ENCODE measurements at regions of chr14 and their contacts with region 1.

Region 1: GRCh38 chr14:54566410-54567223 is at the start of gene SAMD4A:
- DNase-seq: peak; percentile 19 to 84 (median 55)
- ATAC-seq: peak; percentile 41
- H3K4me3 ChIP-seq: peak within 1 kb of the TSS; percentile 80
- H3K4me3 Mint-ChIP-seq: peak within 1 kb of the TSS; percentile 96
- H3K27ac ChIP-seq: peak within 1 kb of the TSS in 1 of 2 donors; percentile 41
- H3K27ac Mint-ChIP-seq: peak within 1 kb of the TSS; percentile 91
- H3K4me1 ChIP-seq: peaks cover 29% of the 10 kb centered on the region
- H3K4me1 Mint-ChIP-seq: peaks cover 15% of the 10 kb centered on the region
- H3K27me3 ChIP-seq: peaks cover 6 to 12% of the 10 kb centered on the region in 2 experiments
- H3K27me3 Mint-ChIP-seq: peaks cover 29% of the 10 kb centered on the region
- CTCF ChIP-seq: no peak
- total RNA-seq, gene SAMD4A: 1.9 to 2.3 TPM

Region 2: DNA sequence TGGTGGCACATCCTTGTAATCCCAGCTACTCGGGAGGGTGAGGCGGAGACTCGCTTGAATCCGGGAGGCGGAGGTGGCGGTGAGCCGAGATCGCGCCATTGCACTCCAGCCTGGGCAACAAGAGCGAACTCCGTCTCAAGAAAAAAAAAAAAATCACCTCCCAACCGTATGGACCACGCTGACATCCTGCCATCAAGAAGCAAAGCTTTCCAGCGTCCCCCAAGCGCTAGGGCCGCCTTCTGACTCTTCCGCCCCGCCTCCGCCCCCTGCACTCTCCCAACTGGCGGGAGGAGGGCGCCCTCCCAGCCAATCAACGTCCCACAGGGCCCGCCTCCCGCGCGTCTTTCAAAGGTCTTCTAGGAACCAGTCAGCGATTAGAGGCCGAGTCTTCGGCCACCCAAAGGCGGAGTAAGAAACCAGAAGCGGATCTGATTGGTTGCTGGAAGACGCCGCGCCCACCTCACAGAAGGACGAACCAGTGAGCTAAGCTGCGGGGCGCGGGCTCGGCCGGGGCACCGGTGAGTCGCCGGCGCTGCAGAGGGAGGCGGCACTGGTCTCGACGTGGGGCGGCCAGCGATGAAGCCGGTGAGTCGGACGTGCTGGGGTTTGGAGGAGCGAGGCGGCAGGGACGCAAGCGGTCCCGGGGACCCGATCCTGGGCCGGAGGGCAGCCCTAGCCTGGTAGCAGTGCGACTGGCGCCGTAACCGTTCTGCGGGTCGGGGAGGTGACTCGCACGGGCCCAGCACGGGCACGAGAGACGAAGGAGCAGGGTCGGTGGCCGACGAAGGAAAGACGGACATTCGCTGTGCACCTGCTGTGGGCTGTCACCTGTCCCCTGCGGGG is 169.9 kb before region 1 on chr14 and contains the start of gene CDKN3:
- CTCF ChIA-PET with region 1: interaction called, 4 read pairs
- POLR2A ChIA-PET with region 1: no interaction called
- intact Hi-C with region 1: loop called in 1 of 2 experiments (anchors 5 kb)
- DNase-seq: peak; percentile 92 to 99 (median 96)
- ATAC-seq: peak; percentile 95
- H3K4me3 ChIP-seq: peak within 1 kb of the TSS; percentile 88
- H3K4me3 Mint-ChIP-seq: peak within 1 kb of the TSS; percentile 87
- H3K27ac ChIP-seq: no peak within 1 kb of the TSS
- H3K27ac Mint-ChIP-seq: peak within 1 kb of the TSS; percentile 47
- H3K4me1 ChIP-seq: peaks cover 20% of the 10 kb centered on the region
- H3K4me1 Mint-ChIP-seq: peaks cover 17% of the 10 kb centered on the region
- H3K27me3 ChIP-seq: no peaks in the 10 kb centered on the region
- H3K27me3 Mint-ChIP-seq: no peaks in the 10 kb centered on the region
- CTCF ChIP-seq: no peak
- total RNA-seq, gene CDKN3: 0.61 to 1.4 TPM

Region 3: DNA sequence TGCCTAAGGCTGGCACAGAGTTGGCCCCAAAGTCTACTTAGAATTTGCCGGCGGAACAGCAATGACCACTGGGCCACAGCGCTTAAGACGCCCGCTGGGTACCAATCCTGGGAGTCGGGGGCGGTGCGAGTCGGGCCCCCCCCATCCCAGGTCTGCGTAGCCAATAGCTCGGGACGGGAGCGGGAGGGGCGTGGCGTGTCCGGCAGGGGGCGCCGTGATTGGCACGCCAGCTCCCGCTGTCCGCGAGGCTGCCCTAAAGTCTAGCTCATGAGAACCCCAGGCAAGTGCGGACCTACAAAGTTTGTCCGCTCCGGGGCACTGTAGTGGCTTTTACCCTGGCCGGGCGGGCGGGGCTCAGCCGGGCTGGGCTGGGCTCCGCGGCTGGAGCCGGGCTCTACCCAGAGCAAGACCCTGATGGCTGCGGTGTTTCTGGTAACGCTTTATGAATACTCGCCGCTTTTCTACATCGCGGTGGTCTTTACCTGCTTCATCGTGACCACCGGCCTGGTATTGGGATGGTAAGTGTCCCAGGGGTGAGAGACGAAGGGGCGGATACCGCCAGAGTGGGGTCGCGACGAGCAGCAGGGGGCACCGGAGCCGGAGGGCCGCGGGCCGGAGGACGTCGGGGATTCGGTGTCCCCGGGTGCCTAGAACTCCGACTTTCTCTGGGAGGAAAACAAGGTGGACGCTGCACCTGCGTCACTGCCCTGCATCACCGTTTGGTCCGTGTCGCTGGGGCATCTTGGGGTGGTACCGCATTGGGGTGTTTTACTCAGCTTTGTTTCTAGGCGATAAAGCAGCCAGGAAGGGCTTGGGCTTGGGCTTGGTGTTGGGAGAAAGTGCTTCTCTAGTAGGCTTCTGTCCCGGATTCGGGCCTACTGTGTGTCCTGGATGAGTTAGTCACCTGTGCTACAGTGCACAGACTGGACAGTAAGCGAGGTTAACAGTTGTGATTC is 56.8 kb before region 1 on chr14 and contains the start of gene CGRRF1:
- CTCF ChIA-PET with region 1: interaction called, 6 read pairs
- POLR2A ChIA-PET with region 1: interaction called, 8 read pairs
- intact Hi-C with region 1: loop called in 1 of 2 experiments (anchors 5 kb)
- DNase-seq: peak; percentile 87 to 97 (median 94)
- ATAC-seq: peak; percentile 95
- H3K4me3 ChIP-seq: peak within 1 kb of the TSS; percentile 79
- H3K4me3 Mint-ChIP-seq: peak within 1 kb of the TSS; percentile 96
- H3K27ac ChIP-seq: peak within 1 kb of the TSS; percentile 6 to 59
- H3K27ac Mint-ChIP-seq: peak within 1 kb of the TSS; percentile 78
- H3K4me1 ChIP-seq: peaks cover 31% of the 10 kb centered on the region
- H3K4me1 Mint-ChIP-seq: peaks cover 59% of the 10 kb centered on the region
- H3K27me3 ChIP-seq: no peaks in the 10 kb centered on the region
- H3K27me3 Mint-ChIP-seq: peaks cover 4% of the 10 kb centered on the region
- CTCF ChIP-seq: peak; percentile 64
- total RNA-seq, gene CGRRF1: 34.5 to 42.8 TPM

Region 4: GRCh38 chr14:54580933-54581332 is 14.3 kb after region 1 on chr14:
- CTCF ChIA-PET with region 1: no interaction called
- POLR2A ChIA-PET with region 1: no interaction called
- intact Hi-C with region 1: no loop called
- DNase-seq: no peak
- ATAC-seq: no peak
- H3K4me3 ChIP-seq: no peak overlapping the region
- H3K4me3 Mint-ChIP-seq: no peak overlapping the region
- H3K27ac ChIP-seq: no peak overlapping the region
- H3K27ac Mint-ChIP-seq: no peak overlapping the region
- H3K4me1 ChIP-seq: no peaks in the 10 kb centered on the region
- H3K4me1 Mint-ChIP-seq: no peaks in the 10 kb centered on the region
- H3K27me3 ChIP-seq: no peaks in the 10 kb centered on the region
- H3K27me3 Mint-ChIP-seq: peaks cover 10% of the 10 kb centered on the region
- CTCF ChIP-seq: no peak

Region 5: DNA sequence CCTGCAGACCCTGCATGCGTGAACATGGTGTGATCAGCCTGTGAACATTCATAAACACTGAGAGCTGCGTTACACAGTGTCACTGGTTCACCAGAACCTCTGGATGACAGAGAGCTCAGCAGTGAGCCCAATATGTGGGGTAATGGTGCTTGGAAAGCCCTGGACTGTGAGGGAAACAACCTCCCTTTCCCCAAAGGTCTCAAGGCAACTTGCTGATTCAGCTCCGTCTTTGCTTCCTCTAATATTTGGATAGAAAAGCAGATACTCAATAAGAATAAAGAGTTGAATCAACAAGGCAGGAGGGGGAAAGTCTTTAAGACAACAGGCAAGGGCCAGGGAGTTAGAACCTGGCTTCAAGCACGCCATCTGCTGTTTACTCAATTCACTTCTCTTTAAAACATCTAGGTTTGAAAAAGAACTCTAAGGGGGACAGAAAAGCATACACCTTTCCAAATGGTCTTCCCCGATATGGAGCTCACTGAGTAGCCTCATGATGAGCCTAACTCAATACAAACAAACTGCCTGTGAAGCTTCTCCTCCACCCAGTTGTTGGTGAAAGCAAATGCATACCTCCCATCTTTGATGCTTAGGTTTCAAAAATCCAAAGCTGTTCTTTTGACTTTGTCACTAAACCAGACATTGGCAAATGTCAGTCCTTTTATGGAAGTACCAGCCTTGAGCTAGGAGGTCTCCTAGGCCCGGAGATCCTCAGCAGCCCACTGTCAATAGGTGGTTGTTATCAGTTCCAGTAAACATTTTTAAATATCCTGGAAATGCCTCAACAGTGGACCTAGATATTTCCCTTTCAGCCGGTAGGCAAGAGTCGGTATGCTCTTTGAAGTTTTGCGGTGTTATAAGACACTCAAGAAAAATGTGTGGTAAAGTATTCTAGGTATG is 76.4 kb after region 1 on chr14:
- CTCF ChIA-PET with region 1: interaction called, 7 read pairs
- POLR2A ChIA-PET with region 1: interaction called, 8 read pairs
- intact Hi-C with region 1: loop called (anchors 1 to 2 kb)
- DNase-seq: peak in 5 of 14 experiments; percentile 4 to 55 (median 45)
- ATAC-seq: no peak
- H3K4me3 ChIP-seq: no peak overlapping the region
- H3K4me3 Mint-ChIP-seq: no peak overlapping the region
- H3K27ac ChIP-seq: no peak overlapping the region
- H3K27ac Mint-ChIP-seq: no peak overlapping the region
- H3K4me1 ChIP-seq: no peaks in the 10 kb centered on the region
- H3K4me1 Mint-ChIP-seq: no peaks in the 10 kb centered on the region
- H3K27me3 ChIP-seq: no peaks in the 10 kb centered on the region
- H3K27me3 Mint-ChIP-seq: no peaks in the 10 kb centered on the region
- CTCF ChIP-seq: no peak

Region 6: GRCh38 chr14:54773171-54773975 is 206.8 kb after region 1 on chr14:
- CTCF ChIA-PET with region 1: interaction called, 104 read pairs
- POLR2A ChIA-PET with region 1: interaction called, 42 read pairs
- intact Hi-C with region 1: loop called (anchors 1 kb)
- DNase-seq: peak; percentile 15 to 89 (median 44)
- ATAC-seq: peak; percentile 81
- H3K4me3 ChIP-seq: peak overlapping the region; percentile 28
- H3K4me3 Mint-ChIP-seq: peak overlapping the region; percentile 16
- H3K27ac ChIP-seq: peak overlapping the region in 1 of 2 donors; percentile 37
- H3K27ac Mint-ChIP-seq: peak overlapping the region; percentile 25
- H3K4me1 ChIP-seq: peaks cover 24% of the 10 kb centered on the region
- H3K4me1 Mint-ChIP-seq: peaks cover 14% of the 10 kb centered on the region
- H3K27me3 ChIP-seq: no peaks in the 10 kb centered on the region
- H3K27me3 Mint-ChIP-seq: no peaks in the 10 kb centered on the region
- CTCF ChIP-seq: peak; percentile 8

Region 7: GRCh38 chr14:54881235-54881760 is 314.7 kb after region 1 on chr14:
- CTCF ChIA-PET with region 1: no interaction called
- POLR2A ChIA-PET with region 1: interaction called, 14 read pairs
- intact Hi-C with region 1: no loop called
- DNase-seq: peak in 7 of 14 experiments; percentile 11 to 77 (median 45)
- ATAC-seq: peak; percentile 73
- H3K4me3 ChIP-seq: peak overlapping the region; percentile 62
- H3K4me3 Mint-ChIP-seq: peak overlapping the region; percentile 95
- H3K27ac ChIP-seq: peak overlapping the region; percentile 61 to 74
- H3K27ac Mint-ChIP-seq: peak overlapping the region; percentile 88
- H3K4me1 ChIP-seq: peaks cover 30% of the 10 kb centered on the region
- H3K4me1 Mint-ChIP-seq: peaks cover 59% of the 10 kb centered on the region
- H3K27me3 ChIP-seq: no peaks in the 10 kb centered on the region
- H3K27me3 Mint-ChIP-seq: no peaks in the 10 kb centered on the region
- CTCF ChIP-seq: no peak

Region 8: GRCh38 chr14:54981698-54982097 is 415.1 kb after region 1 on chr14:
- CTCF ChIA-PET with region 1: interaction called, 4 read pairs
- POLR2A ChIA-PET with region 1: no interaction called
- intact Hi-C with region 1: loop called (anchors 2 to 10 kb)
- DNase-seq: no peak
- ATAC-seq: no peak
- H3K4me3 ChIP-seq: no peak overlapping the region
- H3K4me3 Mint-ChIP-seq: no peak overlapping the region
- H3K27ac ChIP-seq: no peak overlapping the region
- H3K27ac Mint-ChIP-seq: no peak overlapping the region
- H3K4me1 ChIP-seq: no peaks in the 10 kb centered on the region
- H3K4me1 Mint-ChIP-seq: no peaks in the 10 kb centered on the region
- H3K27me3 ChIP-seq: no peaks in the 10 kb centered on the region
- H3K27me3 Mint-ChIP-seq: no peaks in the 10 kb centered on the region
- CTCF ChIP-seq: peak; percentile 50

Region 9: DNA sequence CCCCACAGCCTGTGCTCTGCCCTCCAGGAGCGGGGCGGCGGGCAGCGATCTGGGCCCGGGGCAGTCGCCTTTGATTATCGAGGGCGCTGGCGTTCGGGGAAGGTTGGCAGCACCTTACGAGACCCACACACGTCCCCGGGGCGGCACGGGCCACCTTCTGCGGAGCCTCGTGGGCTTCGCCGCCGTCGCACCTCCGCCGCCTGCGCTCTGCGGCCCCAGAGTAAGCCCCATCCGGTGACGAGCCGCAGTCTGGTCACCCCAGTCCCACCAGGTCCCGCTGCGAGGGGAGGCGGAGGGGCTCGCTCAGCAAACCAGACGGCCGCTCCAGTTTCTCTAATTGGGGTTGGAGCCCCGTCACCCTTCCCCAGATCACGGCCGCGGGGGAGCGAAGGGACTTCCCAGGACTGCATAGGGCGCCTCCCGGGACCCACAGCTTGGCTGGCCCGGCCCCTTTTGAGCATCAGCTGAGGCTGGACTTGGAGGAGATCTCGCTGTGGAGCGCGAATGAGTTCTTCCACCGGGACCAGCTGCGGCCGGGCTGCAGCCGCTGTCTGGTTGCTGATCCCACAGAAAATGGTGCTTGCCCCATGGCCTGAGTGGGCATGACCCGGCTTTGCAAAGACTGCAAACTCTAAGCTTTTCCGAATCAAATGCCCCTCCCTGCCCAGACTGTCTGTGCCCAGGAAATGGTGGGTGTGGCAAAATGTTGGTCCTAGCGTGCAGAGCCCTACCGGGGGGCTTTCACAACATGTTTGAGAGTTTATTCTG is 563.0 kb after region 1 on chr14:
- CTCF ChIA-PET with region 1: no interaction called
- POLR2A ChIA-PET with region 1: no interaction called
- intact Hi-C with region 1: no loop called
- DNase-seq: peak; percentile 11 to 84 (median 21)
- ATAC-seq: peak; percentile 66
- H3K4me3 ChIP-seq: peak overlapping the region; percentile 59
- H3K4me3 Mint-ChIP-seq: peak overlapping the region; percentile 81
- H3K27ac ChIP-seq: no peak overlapping the region
- H3K27ac Mint-ChIP-seq: peak overlapping the region; percentile 11
- H3K4me1 ChIP-seq: peaks cover 38% of the 10 kb centered on the region
- H3K4me1 Mint-ChIP-seq: peaks cover 15% of the 10 kb centered on the region
- H3K27me3 ChIP-seq: peaks cover 6 to 16% of the 10 kb centered on the region in 2 experiments
- H3K27me3 Mint-ChIP-seq: peaks cover 54% of the 10 kb centered on the region
- CTCF ChIP-seq: no peak